ENCODE measurements at regions of chr11 and their contacts with region 1.

Region 1: DNA sequence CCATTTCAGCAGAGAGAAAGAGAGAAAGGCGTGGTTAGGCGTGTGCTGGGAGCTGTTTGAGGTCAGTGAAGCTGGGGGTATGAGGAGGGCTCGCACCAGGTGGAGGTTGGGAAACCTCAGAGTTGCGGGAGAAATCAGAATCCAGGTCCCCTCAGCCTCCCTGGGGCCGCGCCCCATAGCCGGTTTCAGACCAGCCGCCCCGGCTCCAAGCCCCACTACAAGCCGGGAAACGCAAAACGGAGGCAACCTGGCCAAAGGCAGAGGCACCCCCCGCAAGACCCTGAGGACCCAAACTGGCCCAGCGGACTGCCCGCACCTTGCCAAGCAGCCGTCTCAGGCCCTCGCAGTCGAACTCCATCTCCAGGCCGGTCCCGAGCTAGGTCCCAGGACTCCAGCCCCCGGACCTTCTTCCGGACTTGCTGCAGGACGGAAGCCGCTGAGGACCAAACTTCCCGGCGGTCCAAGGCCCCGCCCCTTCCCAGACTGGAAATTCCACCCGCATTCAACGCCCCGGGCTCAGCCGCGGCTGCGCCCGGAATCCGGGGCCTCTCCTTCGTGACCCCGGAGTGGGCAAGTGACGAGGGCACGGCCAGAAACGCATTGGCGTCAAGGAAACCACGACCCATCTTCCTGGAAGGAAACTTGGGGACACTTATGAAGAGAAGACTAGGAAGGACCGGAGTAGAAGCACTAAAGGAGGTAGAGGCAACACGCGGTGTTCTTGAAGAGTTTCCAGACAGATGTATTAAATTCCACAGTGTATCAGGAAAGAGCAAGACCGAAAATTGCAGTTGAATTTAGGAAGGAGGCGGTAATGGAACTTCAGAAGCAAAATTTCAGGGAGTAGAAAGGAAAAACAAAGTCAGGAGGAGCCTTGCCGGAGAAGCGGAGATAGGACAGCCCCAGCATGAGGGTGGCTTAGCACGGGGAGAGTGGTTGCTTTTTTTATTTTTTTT is at the start of gene UEVLD:
- DNase-seq: peak; percentile 80 to 98 (median 86)

Region 2: DNA sequence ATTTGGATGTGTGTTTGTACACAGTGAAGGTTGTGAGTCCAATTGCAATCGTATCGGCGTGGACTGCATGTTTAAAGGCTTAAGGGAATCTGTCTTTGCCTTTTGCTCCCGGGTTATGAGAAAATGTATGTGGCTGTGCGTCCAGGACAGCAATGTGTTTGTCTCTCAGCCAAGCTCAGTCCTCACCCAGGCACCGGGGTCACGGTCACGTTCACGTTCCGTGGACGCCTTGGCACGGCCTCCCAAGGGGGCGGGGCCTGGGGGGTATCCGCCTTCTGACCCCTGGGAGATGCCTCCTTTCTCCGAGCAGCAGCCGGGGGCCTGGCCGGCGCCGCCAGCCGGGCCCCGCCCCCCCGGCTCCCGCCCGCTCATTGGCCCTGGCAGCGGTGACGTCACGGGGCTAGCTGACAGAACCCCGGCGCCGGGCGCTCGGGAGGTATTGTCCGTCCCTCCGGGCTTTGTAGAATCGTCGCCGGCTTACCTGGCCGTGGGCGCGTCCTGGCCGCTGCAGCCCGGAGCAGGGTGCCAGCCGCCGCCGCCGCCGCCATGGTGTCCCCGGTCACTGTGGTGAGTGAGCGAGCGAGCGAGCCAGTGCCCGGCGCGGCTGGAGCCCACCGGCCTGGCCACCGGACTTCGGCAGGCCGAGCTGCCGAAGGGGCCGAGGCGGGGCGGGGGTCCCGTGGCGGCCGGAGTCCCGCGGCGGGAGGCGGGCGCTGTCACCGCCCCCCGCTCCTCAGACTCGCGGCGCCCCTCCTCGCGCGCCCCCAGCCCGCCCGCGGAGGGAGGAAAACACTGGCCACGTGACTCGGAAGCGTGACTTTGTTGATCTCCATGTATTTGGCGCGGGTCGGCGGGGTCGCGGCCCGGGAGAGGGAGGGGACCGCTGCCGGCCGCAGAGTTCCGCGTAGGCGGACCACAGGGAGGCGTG is 110.0 kb after region 1 on chr11 and contains the start of gene TMEM86A:
- intact Hi-C with region 1: loop called (anchors 5 kb)
- DNase-seq: peak; percentile 90 to 99 (median 94)